ENCODE measurements at regions of chr2 and their contacts with region 1.

Region 1: GRCh38 chr2:161586517-161587167 is 37.6 kb upstream of the SLC4A10 start:
- DNase-seq: peak; percentile 48

Region 2: DNA sequence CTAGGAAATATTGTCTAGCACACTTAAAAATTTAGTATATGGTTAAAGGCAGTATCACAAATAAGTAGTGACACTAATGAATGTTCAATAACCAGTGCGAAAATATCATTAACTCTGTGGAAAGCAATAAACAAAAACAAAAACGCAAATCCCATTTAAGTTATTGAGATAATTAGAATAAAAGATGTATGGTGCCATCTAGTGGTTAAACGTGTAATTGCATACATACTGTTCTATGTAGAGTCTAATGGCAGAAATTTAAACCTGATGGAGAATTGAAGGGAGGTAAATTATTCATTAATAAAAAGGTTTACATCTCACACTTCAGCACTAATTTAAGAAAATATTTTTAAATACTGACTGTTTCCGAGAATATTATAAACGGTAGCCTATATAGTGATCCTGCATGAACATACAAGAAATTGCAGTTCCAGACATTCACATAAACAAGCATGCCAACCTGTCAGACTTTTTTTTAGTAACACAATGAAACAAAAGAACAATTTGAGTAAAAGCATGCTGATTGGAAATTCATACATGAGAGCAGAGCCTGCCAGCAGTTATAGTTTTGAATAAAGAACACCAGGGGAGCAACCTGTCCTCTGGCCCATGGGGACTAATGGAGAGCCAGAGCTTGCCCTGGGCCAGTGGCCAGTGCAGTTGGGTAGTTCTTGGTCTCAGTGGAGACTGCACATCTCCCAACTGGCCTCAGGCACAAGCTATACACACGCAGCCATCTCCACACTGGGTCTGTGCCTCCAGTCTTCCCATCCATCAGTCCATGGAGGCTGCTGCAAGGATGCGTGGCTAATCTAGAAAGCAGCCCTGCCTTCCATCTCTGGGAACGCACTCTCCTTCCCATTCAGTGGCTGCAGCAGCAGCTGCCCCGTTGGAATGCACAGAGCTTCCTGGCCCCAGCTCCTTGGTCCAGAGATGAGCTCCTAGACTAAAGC is 537.4 kb after region 1 on chr2:
- in situ Hi-C with region 1: loop called (anchors 25 kb)
- DNase-seq: peak; percentile 71

Measured in KBM-7 (cell line).